A673 (cell line): ENCODE measurements at regions of chr6 and their contacts with region 1.

Region 1: GRCh38 chr6:143901885-143902750 is 37.8 kb downstream of the ZC2HC1B start:
- DNase-seq: no peak
- H3K4me3 ChIP-seq: no peak overlapping the region
- H3K27ac ChIP-seq: no peak overlapping the region
- H3K4me1 ChIP-seq: no peaks in the 10 kb centered on the region
- H3K27me3 ChIP-seq: no peaks in the 10 kb centered on the region
- CTCF ChIP-seq: no peak

Region 2: GRCh38 chr6:143940011-143940597 is 38.0 kb after region 1 on chr6:
- CTCF ChIA-PET with region 1: interaction called, 10 read pairs
- POLR2A ChIA-PET with region 1: no interaction called
- intact Hi-C with region 1: no loop called
- DNase-seq: peak; percentile 42
- H3K4me3 ChIP-seq: no peak overlapping the region
- H3K27ac ChIP-seq: no peak overlapping the region
- H3K4me1 ChIP-seq: no peaks in the 10 kb centered on the region
- H3K27me3 ChIP-seq: no peaks in the 10 kb centered on the region
- CTCF ChIP-seq: peak; percentile 56